T-cell (primary cell): ENCODE measurements at regions of chr12 and their contacts with region 1.

Region 1: GRCh38 chr12:71865166-71865713 is 25.7 kb downstream of the TBC1D15 start:
- DNase-seq: no peak
- ATAC-seq: no peak
- H3K4me3 ChIP-seq: no peak overlapping the region
- H3K4me3 Mint-ChIP-seq: peak overlapping the region in 1 of 3 donors; percentile 48
- H3K27ac ChIP-seq: no peak overlapping the region
- H3K27ac Mint-ChIP-seq: peak overlapping the region in 1 of 2 donors; percentile 6
- H3K4me1 ChIP-seq: peaks cover 0 to 26% of the 10 kb centered on the region in 2 experiments
- H3K4me1 Mint-ChIP-seq: peaks cover 68 to 74% (median 70%) of the 10 kb centered on the region in 3 donors
- H3K27me3 ChIP-seq: no peaks in the 10 kb centered on the region
- H3K27me3 Mint-ChIP-seq: no peaks in the 10 kb centered on the region

Region 2: GRCh38 chr12:71799106-71799505 is 66.1 kb before region 1 on chr12:
- CTCF ChIA-PET with region 1: no interaction called
- POLR2A ChIA-PET with region 1: no interaction called
- DNase-seq: no peak
- ATAC-seq: no peak
- H3K4me3 ChIP-seq: no peak overlapping the region
- H3K4me3 Mint-ChIP-seq: no peak overlapping the region
- H3K27ac ChIP-seq: no peak overlapping the region
- H3K27ac Mint-ChIP-seq: no peak overlapping the region
- H3K4me1 ChIP-seq: no peaks in the 10 kb centered on the region
- H3K4me1 Mint-ChIP-seq: no peaks in the 10 kb centered on the region
- H3K27me3 ChIP-seq: peaks cover 0 to 2% of the 10 kb centered on the region in 2 experiments
- H3K27me3 Mint-ChIP-seq: peaks cover 0 to 3% of the 10 kb centered on the region in 2 donors

Region 3: DNA sequence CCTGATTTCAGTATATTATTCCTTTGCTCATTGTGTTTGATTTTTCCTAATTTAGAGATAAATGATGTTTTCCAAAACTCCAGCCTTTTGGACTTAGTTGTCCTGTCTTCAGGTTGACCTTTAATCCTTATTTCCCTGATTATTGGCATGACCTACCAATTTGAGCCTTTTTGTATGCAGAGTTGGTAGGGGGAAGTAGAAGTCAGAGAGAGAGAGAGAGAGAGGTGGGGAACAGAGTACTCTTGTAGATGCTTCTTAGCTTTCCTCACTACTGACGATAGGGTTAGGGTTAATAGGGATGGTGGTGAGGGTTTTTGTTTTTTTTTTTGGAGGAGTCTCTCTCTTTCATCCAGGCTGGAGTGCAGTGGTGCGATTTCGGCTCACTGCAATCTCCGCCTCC is 13.0 kb after region 1 on chr12:
- CTCF ChIA-PET with region 1: no interaction called
- POLR2A ChIA-PET with region 1: interaction called, 7 to 14 read pairs
- DNase-seq: no peak
- ATAC-seq: no peak
- H3K4me3 ChIP-seq: no peak overlapping the region
- H3K4me3 Mint-ChIP-seq: no peak overlapping the region
- H3K27ac ChIP-seq: no peak overlapping the region
- H3K27ac Mint-ChIP-seq: no peak overlapping the region
- H3K4me1 ChIP-seq: no peaks in the 10 kb centered on the region
- H3K4me1 Mint-ChIP-seq: peaks cover 25 to 29% (median 28%) of the 10 kb centered on the region in 3 donors
- H3K27me3 ChIP-seq: no peaks in the 10 kb centered on the region
- H3K27me3 Mint-ChIP-seq: no peaks in the 10 kb centered on the region

Region 4: GRCh38 chr12:73589220-73589619 is 1724.0 kb after region 1 on chr12:
- CTCF ChIA-PET with region 1: no interaction called
- POLR2A ChIA-PET with region 1: no interaction called
- DNase-seq: no peak
- ATAC-seq: no peak
- H3K4me3 ChIP-seq: no peak overlapping the region
- H3K4me3 Mint-ChIP-seq: no peak overlapping the region
- H3K27ac ChIP-seq: no peak overlapping the region
- H3K27ac Mint-ChIP-seq: no peak overlapping the region
- H3K4me1 ChIP-seq: no peaks in the 10 kb centered on the region
- H3K4me1 Mint-ChIP-seq: no peaks in the 10 kb centered on the region
- H3K27me3 ChIP-seq: no peaks in the 10 kb centered on the region
- H3K27me3 Mint-ChIP-seq: no peaks in the 10 kb centered on the region